Panc1 (cell line): ENCODE measurements at regions of chr15 and their contacts with region 1.

Region 1: DNA sequence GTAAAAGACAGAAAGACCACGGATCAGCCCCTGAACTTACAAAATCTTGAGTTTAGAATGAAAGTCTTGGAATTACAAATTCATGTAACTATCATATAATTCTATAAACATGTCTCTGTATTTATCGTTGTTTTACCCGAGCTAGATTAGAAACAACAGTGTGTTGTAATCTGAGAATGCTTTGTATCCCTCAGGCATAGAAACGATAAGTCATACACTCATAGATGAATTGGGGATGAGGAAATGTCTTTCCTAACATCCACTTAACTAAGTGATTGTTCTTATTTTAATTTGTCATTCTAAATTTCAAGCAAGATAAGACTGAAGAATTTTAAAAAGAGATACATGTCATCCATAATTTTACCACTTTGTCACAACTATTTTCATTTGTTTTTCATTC is 165.3 kb downstream of the RYR3 start:
- DNase-seq: no peak
- ATAC-seq: no peak
- H3K4me3 ChIP-seq: no peak overlapping the region
- H3K27ac ChIP-seq: no peak overlapping the region
- H3K4me1 ChIP-seq: no peaks in the 10 kb centered on the region
- H3K27me3 ChIP-seq: no peaks in the 10 kb centered on the region
- CTCF ChIP-seq: no peak

Region 2: DNA sequence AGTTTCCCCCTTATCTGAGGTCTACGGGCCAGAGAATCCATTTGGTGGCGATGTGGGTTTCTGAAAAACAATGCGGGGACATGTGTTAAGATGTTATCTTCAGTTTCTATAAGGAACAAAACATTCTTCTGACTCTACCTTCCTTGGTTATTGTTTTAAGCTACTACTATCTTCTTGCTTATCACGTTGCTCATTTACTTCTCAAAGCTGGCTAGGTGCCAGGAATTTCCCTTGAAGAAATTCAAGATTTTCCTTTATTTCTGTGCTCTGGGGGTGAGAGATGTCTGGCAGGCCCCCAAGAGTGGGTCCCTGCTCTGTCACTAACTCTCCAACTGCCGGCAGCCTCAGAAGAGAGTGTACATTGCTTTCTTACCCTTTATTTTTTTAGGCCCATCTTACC is 45.5 kb before region 1 on chr15:
- CTCF ChIA-PET with region 1: no interaction called
- POLR2A ChIA-PET with region 1: no interaction called
- in situ Hi-C with region 1: no loop called
- intact Hi-C with region 1: no loop called
- DNase-seq: no peak
- ATAC-seq: no peak
- H3K4me3 ChIP-seq: no peak overlapping the region
- H3K27ac ChIP-seq: no peak overlapping the region
- H3K4me1 ChIP-seq: no peaks in the 10 kb centered on the region
- H3K27me3 ChIP-seq: 0 out of 2 replicates have a peak, but pooled peaks cover 3% of the 10 kb centered on the region
- CTCF ChIP-seq: no peak

Region 3: DNA sequence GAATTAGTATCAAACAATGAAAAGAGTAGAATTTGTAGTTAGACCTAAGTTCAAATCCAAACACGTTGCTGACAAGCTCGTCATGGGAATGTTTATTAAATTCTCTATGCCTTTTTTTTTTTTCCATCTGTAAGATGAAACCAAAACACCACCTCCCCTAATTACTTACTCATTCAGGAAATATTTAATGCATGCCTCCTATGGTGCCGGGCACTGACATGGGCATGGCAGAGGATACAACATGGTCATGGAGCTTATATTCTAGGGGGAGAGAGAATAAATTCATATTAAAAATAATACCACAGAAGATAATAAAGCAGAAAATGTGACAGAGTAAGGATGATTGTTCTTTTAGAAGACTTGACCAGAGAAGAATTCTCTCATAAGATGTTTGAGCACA is 50.5 kb after region 1 on chr15:
- CTCF ChIA-PET with region 1: no interaction called
- POLR2A ChIA-PET with region 1: no interaction called
- in situ Hi-C with region 1: no loop called
- intact Hi-C with region 1: loop called (anchors 5 kb)
- DNase-seq: no peak
- ATAC-seq: no peak
- H3K4me3 ChIP-seq: no peak overlapping the region
- H3K27ac ChIP-seq: no peak overlapping the region
- H3K4me1 ChIP-seq: no peaks in the 10 kb centered on the region
- H3K27me3 ChIP-seq: peaks cover 2% of the 10 kb centered on the region; the same call in 1 of the 2 replicates
- CTCF ChIP-seq: no peak